Activated B cell treated with CpG ODN at 0.5 μM for 24 hours (primary cell): ENCODE measurements at regions of chr7 and their contacts with region 1.

Region 1: DNA sequence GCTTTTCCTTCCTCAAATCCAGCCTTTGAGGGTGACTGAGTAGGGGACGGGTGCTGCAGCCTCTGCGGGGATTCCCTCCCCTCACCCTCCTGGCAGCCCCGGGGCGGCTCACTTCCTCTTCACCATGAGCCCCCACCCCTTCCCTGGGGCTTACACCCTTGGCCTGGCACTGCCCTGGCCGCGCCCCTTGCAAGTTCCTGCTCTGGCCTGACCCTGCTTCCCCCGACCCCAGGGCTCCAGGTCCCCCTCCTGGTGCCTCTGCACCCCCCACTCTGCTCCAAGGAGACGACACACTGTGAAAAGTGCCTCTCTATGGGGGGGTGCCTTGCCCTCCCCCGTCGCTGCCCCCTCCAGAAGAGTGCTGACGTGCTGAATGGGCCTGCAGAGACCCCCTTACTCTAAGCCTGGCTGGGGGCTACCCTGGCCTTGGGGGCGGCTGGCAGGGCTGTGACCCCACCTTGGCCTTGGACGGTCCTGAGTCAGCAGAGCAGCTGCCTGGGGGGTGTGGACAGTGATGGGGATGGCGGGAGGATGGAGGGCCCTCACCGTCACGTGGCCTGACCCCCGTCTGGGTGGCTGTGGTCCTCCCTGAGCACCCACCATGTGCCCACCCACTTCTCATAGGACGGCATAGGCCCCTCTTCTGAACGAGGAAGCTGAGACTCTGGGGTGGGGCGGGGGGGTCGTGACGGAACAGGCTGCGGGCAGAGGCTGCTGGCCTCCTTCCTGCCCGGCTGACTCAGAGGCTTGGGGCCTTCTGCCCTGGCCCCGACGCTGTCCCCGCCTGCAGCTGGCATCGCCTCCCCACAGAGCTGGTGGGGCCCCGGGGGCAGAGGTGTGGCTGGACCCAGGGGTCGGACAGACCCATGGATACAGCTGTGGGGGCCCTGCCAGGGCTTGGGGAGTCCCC is 9.8 kb downstream of the LFNG start:
- DNase-seq: peak; percentile 79
- ATAC-seq: peak; percentile 68
- H3K4me3 Mint-ChIP-seq: peak overlapping the region; percentile 79
- H3K27ac Mint-ChIP-seq: peak overlapping the region; percentile 97
- H3K4me1 Mint-ChIP-seq: peaks cover 66% of the 10 kb centered on the region
- H3K27me3 Mint-ChIP-seq: no peaks in the 10 kb centered on the region
- CTCF ChIP-seq: no peak

Region 2: DNA sequence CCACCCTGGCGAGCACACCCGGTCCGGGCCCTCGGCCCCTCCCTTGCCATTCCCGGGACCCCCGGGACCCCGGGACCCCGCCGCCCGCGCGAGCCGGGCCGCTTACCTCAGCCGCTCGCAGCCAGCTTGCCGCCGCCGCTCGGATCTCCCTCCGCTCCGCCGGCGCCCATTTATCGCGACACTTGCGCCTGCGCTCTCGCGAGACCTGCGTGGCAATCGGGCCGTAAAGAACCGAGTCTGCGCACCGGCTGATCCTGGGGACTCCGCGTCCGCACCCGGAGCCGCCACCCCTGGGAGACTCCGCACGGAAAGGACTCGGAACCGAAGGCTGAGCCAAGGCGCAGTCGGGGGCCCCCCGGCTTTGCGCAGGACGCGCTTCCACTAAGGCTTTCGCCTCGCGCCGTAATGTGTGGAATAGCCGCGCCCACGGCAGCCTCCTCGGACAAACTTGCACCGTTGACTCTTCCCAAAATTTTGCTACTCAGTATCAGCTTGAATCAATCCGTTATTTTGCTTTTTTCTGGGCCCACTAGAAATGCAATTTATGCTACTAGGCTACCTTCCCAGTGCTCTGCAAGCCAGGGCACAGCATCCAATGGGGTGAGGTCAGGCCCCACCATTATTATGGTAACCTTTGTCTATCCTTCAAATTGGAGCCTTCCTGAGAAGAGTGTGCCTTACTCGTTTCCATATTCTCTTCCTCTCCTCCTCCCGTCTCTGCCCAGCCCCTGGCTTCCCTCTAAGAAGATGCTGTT is 296.5 kb before region 1 on chr7 and contains the start of gene MAD1L1:
- CTCF ChIA-PET with region 1: no interaction called
- POLR2A ChIA-PET with region 1: no interaction called
- intact Hi-C with region 1: loop called (anchors 10 kb)
- DNase-seq: peak; percentile 88
- ATAC-seq: peak; percentile 68
- H3K4me3 Mint-ChIP-seq: peak within 1 kb of the TSS; percentile 90
- H3K27ac Mint-ChIP-seq: peak within 1 kb of the TSS; percentile 81
- H3K4me1 Mint-ChIP-seq: peaks cover 61% of the 10 kb centered on the region
- H3K27me3 Mint-ChIP-seq: no peaks in the 10 kb centered on the region
- CTCF ChIP-seq: no peak
- total RNA-seq, gene MAD1L1: 54.6 and 65.7 TPM in 2 replicates

Region 3: DNA sequence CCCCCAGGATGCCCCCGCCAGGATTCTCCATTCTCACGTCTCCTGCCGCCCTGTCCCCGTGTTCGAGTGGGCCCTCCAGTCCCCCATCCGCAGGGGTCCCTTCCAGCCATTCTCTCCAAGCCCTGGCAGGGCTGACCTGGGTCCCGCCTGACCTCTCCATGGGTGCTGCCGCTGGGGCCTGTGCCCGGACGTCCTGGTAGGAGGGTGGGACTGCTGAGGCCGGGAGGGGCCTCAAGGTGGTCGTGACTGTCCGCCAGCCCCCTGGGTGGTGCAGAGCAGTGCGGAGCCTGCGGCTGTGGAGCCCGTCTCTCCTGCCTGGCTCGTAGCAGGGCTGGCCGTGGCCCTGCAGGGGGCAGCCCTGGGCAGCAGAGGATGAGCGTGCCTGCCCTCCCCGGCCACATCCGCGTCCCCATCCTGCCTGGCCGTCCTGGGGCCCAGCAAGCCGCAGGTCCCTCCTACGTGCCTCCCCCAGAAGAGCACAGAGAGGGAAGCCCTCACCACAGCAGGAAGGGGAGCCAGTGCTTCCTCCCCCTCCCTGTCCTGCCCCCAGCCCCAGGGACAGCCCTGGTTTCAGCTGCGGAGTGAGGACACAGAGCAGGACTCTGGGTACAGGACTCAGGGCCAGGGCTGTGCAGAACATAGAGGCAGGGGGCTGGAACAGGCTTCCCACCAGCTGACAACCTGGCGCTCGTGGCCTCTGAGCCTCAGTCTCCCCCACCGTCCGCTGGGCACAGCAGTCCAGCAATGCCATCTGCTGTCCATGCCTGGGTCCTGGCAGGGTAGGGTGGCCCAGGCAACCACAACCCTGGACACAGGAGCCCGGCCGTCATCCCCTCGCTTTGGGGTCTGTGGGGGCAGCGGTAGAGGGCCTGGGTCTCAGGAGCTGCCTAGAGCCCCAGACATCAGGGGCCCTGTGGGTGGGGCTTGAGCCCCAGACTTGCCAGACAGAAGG is 51.7 kb before region 1 on chr7:
- CTCF ChIA-PET with region 1: no interaction called
- POLR2A ChIA-PET with region 1: interaction called, 11 read pairs
- intact Hi-C with region 1: loop called (anchors 1 kb)
- DNase-seq: peak; percentile 66
- ATAC-seq: peak; percentile 98
- H3K4me3 Mint-ChIP-seq: no peak overlapping the region
- H3K27ac Mint-ChIP-seq: no peak overlapping the region
- H3K4me1 Mint-ChIP-seq: peaks cover 11% of the 10 kb centered on the region
- H3K27me3 Mint-ChIP-seq: no peaks in the 10 kb centered on the region
- CTCF ChIP-seq: peak; percentile 68

Region 4: GRCh38 chr7:2519119-2519930 is 10.1 kb before region 1 on chr7 and contains the start of gene LFNG:
- CTCF ChIA-PET with region 1: no interaction called
- POLR2A ChIA-PET with region 1: interaction called, 142 read pairs
- intact Hi-C with region 1: loop called (anchors 1 kb)
- DNase-seq: peak; percentile 94
- ATAC-seq: peak; percentile 75
- H3K4me3 Mint-ChIP-seq: peak within 1 kb of the TSS; percentile 96
- H3K27ac Mint-ChIP-seq: peak within 1 kb of the TSS; percentile 87
- H3K4me1 Mint-ChIP-seq: peaks cover 49% of the 10 kb centered on the region
- H3K27me3 Mint-ChIP-seq: no peaks in the 10 kb centered on the region
- CTCF ChIP-seq: no peak
- total RNA-seq, gene LFNG: 87.4 and 95.8 TPM in 2 replicates

Region 5: DNA sequence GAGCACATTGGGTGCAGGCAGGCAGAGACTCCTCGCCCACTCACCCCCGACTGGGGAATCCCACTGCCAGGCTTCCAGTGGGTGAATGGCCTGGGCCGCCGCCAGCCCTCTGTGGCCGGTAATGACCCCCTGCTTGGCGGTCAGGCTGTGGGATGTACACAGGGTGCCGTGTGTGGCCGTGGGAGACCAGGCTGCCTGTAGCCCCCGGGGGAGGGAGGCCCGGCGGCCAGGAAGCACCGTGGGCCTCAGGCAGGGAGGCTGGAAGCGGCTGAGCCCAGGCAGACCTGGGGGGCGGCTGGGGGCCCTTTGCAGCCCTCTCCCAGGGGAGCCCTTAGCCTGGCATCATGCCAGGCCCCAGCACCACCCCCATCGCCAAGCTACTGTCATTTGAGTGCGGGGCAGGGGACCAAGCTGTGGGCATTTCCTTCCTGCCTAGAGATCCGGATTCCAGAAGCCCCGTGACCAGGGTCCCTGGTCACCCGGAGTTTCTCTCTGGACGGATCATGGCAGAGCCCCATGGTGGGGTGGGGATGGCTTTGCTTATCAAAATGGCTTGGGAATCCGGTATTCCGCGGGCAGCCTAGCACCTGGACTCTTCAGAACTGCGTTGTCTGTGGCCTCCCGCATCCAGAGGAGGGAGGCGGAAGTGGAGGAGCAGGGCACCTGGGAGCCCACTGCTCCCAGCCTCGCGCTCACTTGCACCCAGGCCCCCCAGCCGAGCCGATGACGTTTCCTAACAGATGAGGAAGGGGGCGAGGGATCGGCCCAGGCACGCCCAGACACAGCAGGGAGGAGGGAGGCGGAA is 103.5 kb after region 1 on chr7:
- CTCF ChIA-PET with region 1: no interaction called
- POLR2A ChIA-PET with region 1: interaction called, 16 read pairs
- intact Hi-C with region 1: loop called (anchors 1 kb)
- DNase-seq: peak; percentile 45
- ATAC-seq: no peak
- H3K4me3 Mint-ChIP-seq: peak overlapping the region; percentile 87
- H3K27ac Mint-ChIP-seq: peak overlapping the region; percentile 70
- H3K4me1 Mint-ChIP-seq: peaks cover 42% of the 10 kb centered on the region
- H3K27me3 Mint-ChIP-seq: peaks cover under 1% of the 10 kb centered on the region
- CTCF ChIP-seq: no peak

Region 6: GRCh38 chr7:2771274-2771731 is 241.9 kb after region 1 on chr7:
- CTCF ChIA-PET with region 1: no interaction called
- POLR2A ChIA-PET with region 1: no interaction called
- intact Hi-C with region 1: loop called (anchors 1 kb)
- DNase-seq: no peak
- ATAC-seq: no peak
- H3K4me3 Mint-ChIP-seq: no peak overlapping the region
- H3K27ac Mint-ChIP-seq: peak overlapping the region; percentile 35
- H3K4me1 Mint-ChIP-seq: peaks cover 50% of the 10 kb centered on the region
- H3K27me3 Mint-ChIP-seq: no peaks in the 10 kb centered on the region
- CTCF ChIP-seq: no peak